ENCODE measurements at regions of chr20 and their contacts with region 1.

Region 1: DNA sequence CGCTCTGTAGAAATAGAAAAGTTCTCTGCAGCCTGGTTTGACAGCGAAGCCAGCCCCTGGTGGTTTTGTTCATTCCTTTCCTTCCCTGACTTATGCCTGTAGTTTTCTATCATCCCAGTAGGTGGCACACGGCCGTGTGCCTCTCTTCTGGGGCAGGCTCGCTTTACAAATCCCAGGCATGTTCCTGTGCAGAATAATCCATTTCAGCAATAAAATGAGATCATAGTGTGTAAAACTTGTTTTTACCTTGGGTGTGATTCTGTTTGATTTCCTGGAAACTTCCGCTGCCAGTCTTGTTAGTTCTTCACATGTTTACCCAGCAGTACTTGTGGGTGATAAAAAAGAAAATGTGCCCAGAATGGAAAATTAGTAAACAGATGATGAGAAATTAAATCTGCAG is 7.4 kb upstream of the INSM1 start:
- DNase-seq: peak; percentile 59
- H3K4me3 Mint-ChIP-seq: no peak overlapping the region
- H3K27ac Mint-ChIP-seq: no peak overlapping the region
- H3K4me1 Mint-ChIP-seq: peaks cover 24% of the 10 kb centered on the region
- H3K27me3 Mint-ChIP-seq: peaks cover 48% of the 10 kb centered on the region

Region 2: GRCh38 chr20:20052074-20052970 is 308.1 kb before region 1 on chr20 and contains the starts of genes CFAP61 and CRNKL1:
- CTCF ChIA-PET with region 1: no interaction called
- POLR2A ChIA-PET with region 1: no interaction called
- intact Hi-C with region 1: loop called (anchors 10 kb)
- DNase-seq: peak; percentile 98
- H3K4me3 Mint-ChIP-seq: peak within 1 kb of the TSS; percentile 99
- H3K27ac Mint-ChIP-seq: peak within 1 kb of the TSS; percentile 96
- H3K4me1 Mint-ChIP-seq: peaks cover 24% of the 10 kb centered on the region
- H3K27me3 Mint-ChIP-seq: peaks cover 8% of the 10 kb centered on the region
- total RNA-seq, gene CFAP61: not detected
- total RNA-seq, gene CRNKL1: 21.5 to 21.8 TPM

Region 3: GRCh38 chr20:20452254-20452676 is 91.8 kb after region 1 on chr20:
- CTCF ChIA-PET with region 1: interaction called, 4 read pairs
- POLR2A ChIA-PET with region 1: no interaction called
- intact Hi-C with region 1: loop called (anchors 10 kb)
- DNase-seq: peak; percentile 87
- H3K4me3 Mint-ChIP-seq: peak overlapping the region; percentile 72
- H3K27ac Mint-ChIP-seq: peak overlapping the region; percentile 71
- H3K4me1 Mint-ChIP-seq: peaks cover 49% of the 10 kb centered on the region
- H3K27me3 Mint-ChIP-seq: no peaks in the 10 kb centered on the region

Region 4: DNA sequence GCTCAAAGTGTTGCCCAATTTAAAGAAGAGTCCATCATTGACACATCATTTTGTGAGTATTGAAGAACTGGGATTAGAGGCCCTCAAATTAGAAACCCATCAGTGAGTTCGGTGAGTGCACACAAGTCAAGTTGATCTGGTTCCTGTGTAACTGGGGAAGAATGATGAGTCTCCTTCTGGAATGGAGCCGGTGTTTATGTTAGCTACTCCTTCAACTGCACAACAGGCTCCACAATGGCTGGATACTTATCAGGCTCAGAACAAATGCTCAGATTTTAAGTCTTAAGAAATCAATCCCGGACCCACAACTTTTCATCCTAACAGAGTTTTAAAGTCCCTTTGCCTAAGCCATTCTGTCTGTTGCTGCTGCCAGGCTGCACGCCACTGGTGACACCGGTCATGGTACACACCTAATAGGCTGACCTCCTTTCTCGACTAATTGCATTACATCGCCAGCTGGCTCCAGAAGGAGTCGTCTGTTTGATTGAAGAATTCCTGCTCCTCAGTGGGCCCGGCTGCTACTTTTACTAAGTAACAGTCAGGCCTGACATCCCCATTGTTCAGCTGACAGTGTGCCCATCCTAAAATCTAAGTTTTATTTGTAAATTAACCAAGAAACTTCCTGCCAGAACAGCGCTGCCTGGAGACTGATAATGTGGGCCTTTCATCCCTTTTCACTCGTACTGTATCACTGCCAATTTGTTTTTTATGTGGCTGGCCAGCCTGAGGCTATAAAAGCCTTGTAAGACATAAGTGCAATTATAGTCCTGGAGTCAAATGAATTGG is 137.8 kb after region 1 on chr20:
- CTCF ChIA-PET with region 1: interaction called, 3 read pairs
- POLR2A ChIA-PET with region 1: no interaction called
- intact Hi-C with region 1: loop called (anchors 2 kb)
- DNase-seq: no peak
- H3K4me3 Mint-ChIP-seq: no peak overlapping the region
- H3K27ac Mint-ChIP-seq: peak overlapping the region; percentile 84
- H3K4me1 Mint-ChIP-seq: peaks cover 62% of the 10 kb centered on the region
- H3K27me3 Mint-ChIP-seq: no peaks in the 10 kb centered on the region

Region 5: DNA sequence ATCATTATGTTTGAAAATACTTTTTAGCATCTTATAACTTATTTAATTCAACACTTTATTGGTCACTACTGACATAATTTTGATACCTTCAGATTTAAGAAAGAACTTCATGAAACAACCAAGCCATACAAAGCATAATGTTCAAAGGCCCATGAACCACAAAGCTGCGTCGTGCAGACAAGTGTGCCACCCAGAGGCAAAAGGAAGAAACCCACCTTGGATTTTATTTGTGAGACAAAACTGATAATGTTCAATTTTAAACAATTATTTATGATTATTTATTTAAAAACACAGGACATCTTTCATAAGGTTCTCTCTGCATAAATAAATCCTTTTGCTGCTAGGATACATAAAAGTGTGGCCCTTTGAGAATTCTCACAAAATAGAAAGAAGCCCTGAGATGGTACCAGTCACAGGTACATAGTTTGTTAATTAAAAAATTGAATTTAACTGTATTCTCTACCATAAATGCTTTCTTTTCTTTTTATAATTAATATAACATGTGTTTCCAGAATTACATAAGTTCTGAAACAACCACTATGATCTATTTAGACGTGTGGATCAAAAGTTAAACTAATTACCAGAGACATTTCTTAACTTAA is 208.2 kb after region 1 on chr20:
- CTCF ChIA-PET with region 1: interaction called, 8 read pairs
- POLR2A ChIA-PET with region 1: no interaction called
- intact Hi-C with region 1: loop called (anchors 1 kb)
- DNase-seq: peak; percentile 52
- H3K4me3 Mint-ChIP-seq: no peak overlapping the region
- H3K27ac Mint-ChIP-seq: no peak overlapping the region
- H3K4me1 Mint-ChIP-seq: peaks cover 2% of the 10 kb centered on the region
- H3K27me3 Mint-ChIP-seq: no peaks in the 10 kb centered on the region

Region 6: DNA sequence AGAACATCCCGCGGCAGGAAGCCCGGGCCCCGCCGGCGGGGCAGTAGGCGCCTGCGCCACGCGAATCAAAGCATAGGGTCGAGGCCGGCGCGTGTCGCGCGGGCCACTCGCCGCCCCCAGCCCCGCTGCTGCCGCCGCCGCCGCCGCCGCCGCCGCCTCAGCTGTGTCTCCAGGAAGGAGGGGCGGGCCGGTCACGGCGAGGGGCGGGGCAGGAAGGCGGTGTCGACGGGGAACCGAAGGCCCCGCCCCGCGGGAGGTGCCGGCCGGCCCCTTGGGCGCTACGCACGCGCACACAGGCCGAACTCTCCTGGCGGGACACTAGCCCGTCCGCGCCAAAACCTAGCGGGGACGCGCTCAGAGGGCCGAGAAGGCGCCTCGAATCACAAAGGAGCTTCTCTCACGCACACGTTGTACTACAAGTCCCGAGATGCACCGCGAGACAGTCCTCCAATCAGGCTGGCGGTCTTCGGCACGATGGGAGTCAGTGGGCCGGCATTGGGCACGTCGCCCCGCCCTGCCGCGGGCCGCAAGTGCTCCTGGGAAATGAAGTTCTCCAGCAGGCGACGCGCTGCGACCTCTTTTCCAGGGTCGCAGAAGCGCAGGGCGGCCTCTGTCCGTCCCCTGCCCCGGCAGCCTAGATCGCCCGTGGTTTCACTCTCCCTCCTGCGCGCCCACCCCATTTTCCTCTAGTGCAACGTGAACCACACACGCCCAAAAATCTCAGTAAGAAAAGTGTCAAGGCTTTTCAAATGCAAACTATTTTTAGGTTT is 352.2 kb after region 1 on chr20 and contains the start of gene RALGAPA2:
- CTCF ChIA-PET with region 1: no interaction called
- POLR2A ChIA-PET with region 1: no interaction called
- intact Hi-C with region 1: loop called (anchors 5 kb)
- DNase-seq: peak; percentile 95
- H3K4me3 Mint-ChIP-seq: peak within 1 kb of the TSS; percentile 76
- H3K27ac Mint-ChIP-seq: peak within 1 kb of the TSS; percentile 94
- H3K4me1 Mint-ChIP-seq: peaks cover 25% of the 10 kb centered on the region
- H3K27me3 Mint-ChIP-seq: peaks cover 2% of the 10 kb centered on the region
- total RNA-seq, gene RALGAPA2: 15.9 to 16.6 TPM

Region 7: GRCh38 chr20:21505161-21505809 is 1144.8 kb after region 1 on chr20:
- CTCF ChIA-PET with region 1: no interaction called
- POLR2A ChIA-PET with region 1: no interaction called
- intact Hi-C with region 1: loop called (anchors 5 kb)
- DNase-seq: peak; percentile 85
- H3K4me3 Mint-ChIP-seq: peak overlapping the region; percentile 57
- H3K27ac Mint-ChIP-seq: no peak overlapping the region
- H3K4me1 Mint-ChIP-seq: peaks cover 32% of the 10 kb centered on the region
- H3K27me3 Mint-ChIP-seq: peaks cover 49% of the 10 kb centered on the region

Measured in activated CD4-positive, alpha-beta memory T cell treated with anti-CD3 and anti-CD28 coated beads for 36 hours (primary cell).